Tibial artery (tissue), 4 donors: ENCODE measurements at regions of chr1 and their contacts with region 1.

Region 1: GRCh38 chr1:67429528-67430351 is 462 bp downstream of the SERBP1 start:
- DNase-seq: peak; percentile 26 to 67
- H3K4me3 ChIP-seq: peak overlapping the region; percentile 81 to 84
- H3K27ac ChIP-seq: peak overlapping the region; percentile 94 to 98
- H3K4me1 ChIP-seq: peaks cover 0 to 59% (median 23%) of the 10 kb centered on the region in 4 donors
- H3K27me3 ChIP-seq: no peaks in the 10 kb centered on the region
- CTCF ChIP-seq: no peak

Region 2: DNA sequence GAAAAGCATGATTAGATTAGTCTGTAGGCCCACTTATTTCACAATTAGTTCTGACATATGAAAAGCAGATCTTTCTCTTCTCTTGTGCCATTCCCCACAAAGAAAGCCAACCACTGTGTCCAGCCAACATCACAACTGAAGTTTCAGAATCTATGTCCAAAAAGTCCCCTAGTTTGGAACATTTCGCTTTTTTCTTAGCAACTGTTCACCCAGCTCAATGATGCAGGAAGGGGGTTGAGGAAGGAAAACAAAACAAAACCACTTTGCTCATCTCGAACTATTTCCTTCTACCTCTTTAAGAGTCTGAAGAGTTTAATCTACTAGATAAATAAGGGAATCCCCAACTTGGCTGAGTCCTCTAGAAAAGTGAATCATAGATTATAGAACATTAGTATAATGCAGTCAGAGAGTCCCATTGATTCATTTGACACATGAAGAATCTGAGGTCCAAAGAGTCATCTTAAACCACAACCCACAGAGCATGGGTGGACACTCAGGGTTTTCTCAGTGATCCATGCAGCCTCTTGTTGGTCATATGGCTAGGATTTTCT is 1055.1 kb before region 1 on chr1:
- intact Hi-C with region 1: no loop called
- DNase-seq: no peak
- H3K4me3 ChIP-seq: no peak overlapping the region
- H3K27ac ChIP-seq: no peak overlapping the region
- H3K4me1 ChIP-seq: peaks cover 0 to 27% (median 12%) of the 10 kb centered on the region in 4 donors
- H3K27me3 ChIP-seq: no peaks in the 10 kb centered on the region
- CTCF ChIP-seq: no peak

Region 3: GRCh38 chr1:67479146-67479891 is 49.6 kb after region 1 on chr1:
- intact Hi-C with region 1: no loop called
- DNase-seq: peak; percentile 27 to 72
- H3K4me3 ChIP-seq: no peak overlapping the region
- H3K27ac ChIP-seq: no peak overlapping the region
- H3K4me1 ChIP-seq: peaks cover 0 to 17% (median 7%) of the 10 kb centered on the region in 4 donors
- H3K27me3 ChIP-seq: no peaks in the 10 kb centered on the region
- CTCF ChIP-seq: no peak

Region 4: GRCh38 chr1:67489643-67490042 is 59.9 kb after region 1 on chr1:
- intact Hi-C with region 1: loop called (anchors 10 kb)
- DNase-seq: no peak
- H3K4me3 ChIP-seq: no peak overlapping the region
- H3K27ac ChIP-seq: no peak overlapping the region
- H3K4me1 ChIP-seq: no peaks in the 10 kb centered on the region
- H3K27me3 ChIP-seq: no peaks in the 10 kb centered on the region
- CTCF ChIP-seq: peak in 1 of 2 experiments; percentile 18

Region 5: DNA sequence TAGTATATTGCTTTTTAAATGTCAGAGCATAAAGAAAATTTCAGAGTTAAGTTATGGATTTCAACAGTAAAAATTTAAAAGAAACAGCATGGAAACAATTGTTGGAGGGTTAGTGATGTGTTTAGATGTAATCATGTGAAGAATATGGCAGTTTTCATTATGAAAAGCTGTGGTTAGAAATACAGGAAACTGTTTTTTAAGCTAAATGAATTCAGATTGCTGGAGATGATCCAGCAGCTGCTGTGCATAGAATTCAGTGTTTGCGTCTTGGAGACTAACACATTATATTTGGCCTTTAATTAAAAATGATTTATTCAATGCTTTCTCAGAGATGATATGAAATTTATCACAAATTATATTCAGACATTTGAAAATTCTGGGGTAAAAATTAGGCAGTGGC is 1864.4 kb after region 1 on chr1:
- intact Hi-C with region 1: no loop called
- DNase-seq: no peak
- H3K4me3 ChIP-seq: no peak overlapping the region
- H3K27ac ChIP-seq: no peak overlapping the region
- H3K4me1 ChIP-seq: no peaks in the 10 kb centered on the region
- H3K27me3 ChIP-seq: no peaks in the 10 kb centered on the region
- CTCF ChIP-seq: no peak